ENCODE measurements at regions of chr12 and their contacts with region 1.

Region 1: DNA sequence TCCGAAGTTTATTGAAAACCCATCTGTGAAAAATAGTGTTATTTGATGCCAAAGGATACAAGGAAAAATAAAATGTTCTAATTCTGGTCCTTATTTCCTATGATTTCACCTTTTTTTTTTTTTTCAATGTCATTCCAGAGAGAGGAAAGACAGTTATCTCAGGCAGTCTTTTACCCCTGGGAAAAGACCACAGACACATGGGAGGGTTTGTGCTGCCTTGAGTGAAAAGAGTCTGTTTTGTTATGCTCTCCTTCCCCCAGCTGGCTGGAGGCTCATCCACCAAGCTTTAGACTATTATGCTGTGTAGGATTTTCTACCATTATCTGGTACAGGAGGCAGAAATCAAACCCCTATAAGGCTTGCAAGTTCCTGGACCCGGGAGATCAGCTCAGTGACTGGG is 151.8 kb downstream of the CRADD start:
- DNase-seq: no peak
- CTCF ChIP-seq: no peak

Region 2: GRCh38 chr12:93839064-93839463 is 10.0 kb after region 1 on chr12:
- CTCF ChIA-PET with region 1: interaction called, 12 read pairs
- POLR2A ChIA-PET with region 1: no interaction called
- DNase-seq: no peak
- CTCF ChIP-seq: no peak

Region 3: GRCh38 chr12:93894391-93895088 is 65.5 kb after region 1 on chr12:
- CTCF ChIA-PET with region 1: no interaction called
- POLR2A ChIA-PET with region 1: no interaction called
- DNase-seq: no peak
- CTCF ChIP-seq: no peak